Activated T-helper 1 cell treated with anti-CD3 and anti-CD28 coated beads, Interleukin-12 subunit alpha, Interleukin-12 subunit beta, Interleukin-2, Interleukin-4 antibody, amounts not matched to agents 30 ng/mL and 10 ng/mL and 1 ng/mL, durations not matched to agents 14 hours and 24 hours and 36 hours (primary cell): ENCODE measurements at regions of chr11 and their contacts with region 1.

Region 1: GRCh38 chr11:110327508-110327907 is 31.1 kb upstream of the RDX start:
- DNase-seq: no peak
- H3K4me3 Mint-ChIP-seq: peak overlapping the region; percentile 96
- H3K27ac Mint-ChIP-seq: peak overlapping the region; percentile 98
- H3K4me1 Mint-ChIP-seq: peaks cover 49% of the 10 kb centered on the region
- H3K27me3 Mint-ChIP-seq: no peaks in the 10 kb centered on the region

Region 2: DNA sequence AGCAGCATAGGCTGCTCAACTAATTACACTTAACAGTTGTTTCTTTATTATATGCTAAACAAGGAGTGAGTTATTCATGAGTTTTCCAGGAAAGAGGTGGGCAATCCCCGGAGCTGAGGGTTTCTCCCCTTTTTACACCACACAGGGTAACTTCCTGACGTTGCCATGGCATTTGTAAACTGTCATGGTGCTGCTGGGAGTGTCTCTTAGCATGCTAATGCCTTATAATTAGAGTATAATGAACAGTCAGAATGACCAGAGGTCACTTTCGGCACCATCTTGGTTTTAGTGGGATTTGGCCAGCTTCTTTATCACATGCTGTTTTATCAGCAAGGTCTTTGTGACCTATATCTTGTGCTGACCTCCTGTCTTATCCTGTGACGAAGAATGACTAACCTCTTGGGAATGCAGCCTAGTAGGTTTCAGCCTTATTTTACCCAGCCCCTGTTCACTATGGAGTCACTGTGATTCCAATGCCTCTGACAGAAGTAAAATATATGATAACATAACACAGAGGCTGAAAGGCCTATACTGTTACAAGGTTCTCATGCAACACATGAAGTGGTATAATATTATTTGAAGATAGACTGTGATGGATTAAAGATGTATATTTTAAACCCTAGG is 10.2 kb after region 1 on chr11:
- intact Hi-C with region 1: loop called (anchors 1 kb)
- DNase-seq: peak; percentile 55
- H3K4me3 Mint-ChIP-seq: no peak overlapping the region
- H3K27ac Mint-ChIP-seq: peak overlapping the region; percentile 76
- H3K4me1 Mint-ChIP-seq: peaks cover 43% of the 10 kb centered on the region
- H3K27me3 Mint-ChIP-seq: no peaks in the 10 kb centered on the region

Region 3: DNA sequence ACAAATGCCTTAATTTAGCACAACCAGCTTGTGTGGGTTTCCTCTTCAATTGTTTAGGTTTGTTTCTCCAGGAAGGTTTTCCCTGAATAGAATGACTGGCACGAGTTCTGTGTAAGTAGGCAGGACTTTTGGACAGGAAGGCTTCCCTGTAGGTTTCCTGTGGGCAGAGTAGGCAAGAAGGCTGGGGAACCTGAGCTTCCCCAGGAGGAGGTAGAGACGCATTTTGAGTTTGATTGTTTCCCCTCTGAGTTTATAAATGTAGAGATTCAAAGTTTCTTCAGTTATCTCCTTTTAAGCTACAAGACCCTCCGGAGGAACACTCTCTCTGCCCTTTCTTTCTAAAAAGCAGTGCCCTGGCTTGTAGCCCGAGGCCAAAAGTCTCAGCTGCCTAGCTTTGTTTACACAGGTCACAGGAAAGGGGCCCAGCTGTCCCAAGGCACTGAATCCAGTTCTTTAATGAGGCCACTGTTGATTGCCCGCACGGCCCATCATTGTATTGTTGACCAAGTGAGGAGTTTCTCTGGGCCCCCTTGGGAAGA is 35.5 kb after region 1 on chr11:
- intact Hi-C with region 1: no loop called
- DNase-seq: no peak
- H3K4me3 Mint-ChIP-seq: peak overlapping the region; percentile 40
- H3K27ac Mint-ChIP-seq: peak overlapping the region; percentile 82
- H3K4me1 Mint-ChIP-seq: peaks cover 28% of the 10 kb centered on the region
- H3K27me3 Mint-ChIP-seq: peaks cover 1% of the 10 kb centered on the region

Region 4: DNA sequence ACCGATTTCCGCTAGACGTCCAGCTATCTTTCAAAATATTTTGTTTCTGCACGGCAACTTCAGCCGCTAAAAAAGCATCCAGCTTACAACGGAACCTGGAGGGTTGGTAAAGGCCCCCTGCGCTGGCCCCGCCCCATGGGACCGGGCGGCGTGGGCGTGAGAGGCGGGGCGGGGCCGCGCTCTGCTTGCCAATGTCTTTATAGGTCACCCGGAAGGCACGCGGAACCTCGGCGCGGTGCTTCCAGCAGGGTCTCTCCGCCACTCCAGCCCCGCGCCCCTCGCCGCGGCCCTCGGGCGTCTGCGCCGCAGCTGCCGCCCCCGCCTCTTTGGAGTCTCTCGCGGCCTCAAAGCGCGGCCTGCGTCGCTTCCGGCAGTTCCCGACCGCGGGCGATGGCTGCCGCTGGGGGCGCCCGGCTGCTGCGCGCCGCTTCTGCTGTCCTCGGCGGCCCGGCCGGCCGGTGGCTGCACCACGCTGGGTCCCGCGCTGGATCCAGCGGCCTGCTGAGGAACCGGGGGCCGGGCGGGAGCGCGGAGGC is 102.3 kb after region 1 on chr11 and contains the start of gene FDX1:
- intact Hi-C with region 1: no loop called
- DNase-seq: peak; percentile 82
- H3K4me3 Mint-ChIP-seq: peak within 1 kb of the TSS; percentile 99
- H3K27ac Mint-ChIP-seq: peak within 1 kb of the TSS; percentile 98
- H3K4me1 Mint-ChIP-seq: peaks cover 51% of the 10 kb centered on the region
- H3K27me3 Mint-ChIP-seq: no peaks in the 10 kb centered on the region
- total RNA-seq, gene FDX1: 14.2 and 15.9 TPM in 2 replicates